A549 (cell line): ENCODE measurements at regions of chr10 and their contacts with region 1.

Region 1: GRCh38 chr10:78657163-78657861 is 411.5 kb upstream of the ZMIZ1 start:
- DNase-seq: peak; percentile 65 to 81
- ATAC-seq: peak; percentile 93 to 99
- H3K4me3 ChIP-seq: no peak overlapping the region
- H3K27ac ChIP-seq: 0 out of 6 replicates have a peak overlapping the region, but pooled peaks of 1 of the 2 experiments have one; percentile 9
- H3K4me1 ChIP-seq: no peaks in the 10 kb centered on the region
- CTCF ChIP-seq: peak; percentile 73
- EP300 ChIP-seq: no peak
- POLR2A ChIP-seq: no peak
- RAD21 ChIP-seq: peak; percentile 83 to 85

Region 2: GRCh38 chr10:78672918-78673317 is 15.6 kb after region 1 on chr10:
- CTCF ChIA-PET with region 1: interaction called, 11 read pairs
- POLR2A ChIA-PET with region 1: no interaction called
- DNase-seq: no peak
- ATAC-seq: no peak
- H3K4me3 ChIP-seq: no peak overlapping the region
- H3K27ac ChIP-seq: no peak overlapping the region
- H3K4me1 ChIP-seq: no peaks in the 10 kb centered on the region
- CTCF ChIP-seq: no peak
- EP300 ChIP-seq: no peak
- POLR2A ChIP-seq: no peak
- RAD21 ChIP-seq: no peak

Region 3: DNA sequence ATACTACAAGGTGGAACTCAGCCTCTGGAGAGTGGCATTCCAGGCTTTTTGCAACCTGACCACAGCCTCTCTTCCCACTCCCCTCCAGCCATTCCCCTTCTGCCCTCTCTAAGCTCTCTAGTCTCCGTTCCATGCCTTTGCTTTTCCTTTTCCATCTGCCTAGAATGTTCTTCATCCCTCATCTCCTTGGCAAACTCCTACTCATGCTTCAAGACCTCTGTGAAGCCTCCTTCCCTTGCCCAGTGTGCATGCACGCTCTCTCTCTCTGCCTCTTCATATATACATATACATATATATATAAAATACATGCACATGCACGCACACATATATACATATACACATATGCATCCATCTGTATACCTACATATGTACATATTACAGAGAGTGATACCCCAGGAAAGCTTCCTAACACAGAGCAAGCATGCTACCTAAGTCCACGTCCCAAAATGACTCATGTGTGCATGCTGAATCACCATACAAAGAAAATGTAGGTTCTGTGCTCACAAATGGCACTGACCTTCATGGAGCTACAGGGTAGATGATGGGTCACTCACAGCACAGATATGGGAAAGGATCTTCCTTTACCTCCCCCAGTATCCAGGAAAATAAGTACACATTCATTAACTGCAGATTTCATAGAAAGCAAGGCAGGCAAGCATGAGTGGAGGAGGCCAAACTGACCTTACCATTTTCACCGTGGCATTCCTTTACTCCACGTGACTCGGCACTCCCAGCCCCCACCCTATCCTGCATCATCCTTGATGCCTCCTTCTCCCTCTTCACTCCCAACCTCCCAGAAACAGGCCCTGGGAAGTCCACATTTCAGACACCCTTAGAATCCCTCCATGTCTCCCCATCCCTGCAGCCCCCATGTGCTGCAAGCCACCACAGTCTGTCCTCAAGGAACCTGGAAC is 173.0 kb after region 1 on chr10:
- CTCF ChIA-PET with region 1: no interaction called
- POLR2A ChIA-PET with region 1: no interaction called
- DNase-seq: peak; percentile 37 to 49
- ATAC-seq: peak; percentile 75 to 83
- H3K4me3 ChIP-seq: no peak overlapping the region
- H3K27ac ChIP-seq: peak overlapping the region; percentile 51 to 76
- H3K4me1 ChIP-seq: peaks cover 18% of the 10 kb centered on the region
- CTCF ChIP-seq: no peak
- EP300 ChIP-seq: no peak
- POLR2A ChIP-seq: no peak
- RAD21 ChIP-seq: no peak